ENCODE measurements at regions of chr20 and their contacts with region 1.

Region 1: DNA sequence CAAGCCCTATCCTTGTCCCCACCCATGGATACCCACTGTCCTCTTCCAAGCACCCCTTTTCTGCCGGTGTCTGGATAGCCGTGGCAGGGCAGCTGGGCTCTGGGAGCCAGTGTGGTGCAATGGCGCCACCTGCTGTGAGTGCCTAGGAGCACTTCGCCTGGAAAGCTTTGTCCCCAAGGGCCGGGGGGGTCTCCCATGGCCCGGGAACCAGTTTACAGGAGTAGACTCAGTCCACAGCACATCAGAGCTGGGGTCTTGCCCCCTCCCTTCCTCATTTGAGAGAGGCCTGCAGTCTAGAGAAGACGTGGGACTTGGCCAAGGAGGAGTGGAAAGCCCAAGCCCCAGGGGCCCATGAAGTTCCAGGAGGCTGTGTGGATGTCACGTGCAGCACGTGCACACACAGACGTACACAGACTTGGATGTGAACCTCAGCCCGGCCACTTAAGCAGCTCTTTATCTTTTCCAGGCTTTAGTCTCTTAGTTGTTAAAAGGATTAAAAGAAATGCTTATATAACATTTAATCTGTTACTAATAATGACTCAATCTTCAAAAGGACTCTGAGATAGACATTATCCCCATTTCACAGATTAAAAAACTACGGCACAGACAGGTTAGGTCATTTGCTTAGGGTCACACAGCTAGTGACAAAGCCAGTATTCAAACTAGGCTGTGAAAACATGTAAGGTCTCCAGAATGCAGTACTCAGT is 40.9 kb upstream of the CDH22 start:
- DNase-seq: peak; percentile 43 to 67
- ATAC-seq: peak; percentile 46 to 77; a peak in 4 of 6 replicates
- H3K4me3 ChIP-seq: no peak overlapping the region
- H3K27ac ChIP-seq: no peak overlapping the region
- H3K4me1 ChIP-seq: peaks cover 14% of the 10 kb centered on the region
- CTCF ChIP-seq: peak; percentile 66
- EP300 ChIP-seq: no peak
- POLR2A ChIP-seq: no peak
- RAD21 ChIP-seq: peak; percentile 74 to 80

Region 2: GRCh38 chr20:46220455-46221204 is 128.6 kb before region 1 on chr20:
- CTCF ChIA-PET with region 1: no interaction called
- POLR2A ChIA-PET with region 1: no interaction called
- DNase-seq: peak in 1 of 2 experiments; percentile 41
- ATAC-seq: peak in 1 of 2 experiments; percentile 66; a peak in 3 of 6 replicates
- H3K4me3 ChIP-seq: no peak overlapping the region
- H3K27ac ChIP-seq: no peak overlapping the region
- H3K4me1 ChIP-seq: peaks cover 8% of the 10 kb centered on the region; the same call in 2 of the 3 replicates
- CTCF ChIP-seq: no peak
- EP300 ChIP-seq: no peak
- POLR2A ChIP-seq: no peak
- RAD21 ChIP-seq: no peak

Region 3: DNA sequence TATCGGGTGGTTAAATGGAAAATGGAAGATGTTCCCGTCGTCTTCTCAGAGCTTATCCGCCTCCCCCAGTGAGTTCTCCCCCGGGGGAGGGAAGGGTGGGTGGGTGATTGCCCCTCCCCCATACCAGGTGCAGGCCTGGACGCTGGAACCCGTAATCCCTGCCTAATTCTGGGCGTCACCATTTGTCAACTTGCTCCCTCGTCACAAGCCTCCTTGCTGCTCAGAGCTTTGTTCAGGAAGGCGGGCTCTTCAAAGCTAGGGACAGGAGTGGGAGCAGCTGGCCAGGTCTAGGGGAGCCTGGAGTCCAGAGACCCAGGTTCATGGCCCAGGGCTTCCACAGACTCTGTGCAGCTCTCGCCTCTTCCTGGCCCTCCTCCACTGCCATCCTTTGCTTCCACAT is 66.5 kb before region 1 on chr20:
- CTCF ChIA-PET with region 1: no interaction called
- POLR2A ChIA-PET with region 1: no interaction called
- DNase-seq: no peak
- ATAC-seq: no peak
- H3K4me3 ChIP-seq: no peak overlapping the region
- H3K27ac ChIP-seq: peak overlapping the region in 1 of 2 experiments; percentile 19; a peak in 1 of 6 replicates
- H3K4me1 ChIP-seq: peaks cover 13% of the 10 kb centered on the region
- CTCF ChIP-seq: no peak
- EP300 ChIP-seq: no peak
- POLR2A ChIP-seq: no peak
- RAD21 ChIP-seq: no peak

Region 4: DNA sequence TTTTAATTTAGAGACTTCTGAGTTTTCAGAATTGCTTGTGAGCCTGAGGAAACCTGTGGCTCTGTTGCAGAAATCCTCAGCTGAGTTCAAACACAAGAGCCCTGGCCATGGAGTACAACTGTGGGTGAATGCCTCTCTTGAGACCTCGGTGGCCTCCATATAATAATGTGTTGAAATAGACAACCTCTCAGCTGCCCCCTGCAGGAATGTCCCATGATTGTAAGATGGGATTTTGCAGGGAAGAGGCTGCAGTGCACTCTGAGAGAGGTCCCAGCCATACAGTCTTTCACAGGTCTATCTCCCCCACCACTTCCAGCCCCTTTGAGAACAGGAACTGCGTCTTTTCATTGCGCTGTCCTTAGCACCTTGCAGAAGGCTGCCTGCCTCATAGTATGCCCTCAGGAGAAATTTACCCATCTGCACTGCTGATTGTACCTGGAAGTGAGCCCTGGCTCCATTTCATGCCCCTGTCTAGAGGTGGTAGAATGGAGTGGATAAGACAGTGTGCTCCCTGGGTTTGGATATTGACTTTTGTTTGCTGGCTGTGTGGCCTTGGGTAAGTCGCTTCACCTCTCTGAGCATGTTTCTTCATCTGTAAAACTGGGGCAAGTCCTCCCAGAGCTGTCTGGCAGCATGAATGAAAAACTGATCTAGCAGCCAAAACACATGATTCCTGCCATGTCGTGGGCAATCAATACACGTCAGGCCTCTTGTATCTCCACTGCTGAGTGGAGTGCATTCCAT is 24.1 kb before region 1 on chr20:
- CTCF ChIA-PET with region 1: interaction called, 13 read pairs
- POLR2A ChIA-PET with region 1: no interaction called
- DNase-seq: peak; percentile 56 to 62
- ATAC-seq: peak; percentile 85 to 95
- H3K4me3 ChIP-seq: no peak overlapping the region
- H3K27ac ChIP-seq: no peak overlapping the region
- H3K4me1 ChIP-seq: no peaks in the 10 kb centered on the region
- CTCF ChIP-seq: peak; percentile 43; the same call in 2 of the 3 replicates
- EP300 ChIP-seq: no peak
- POLR2A ChIP-seq: no peak
- RAD21 ChIP-seq: peak; percentile 38 to 50; a peak in 3 of 5 replicates

Region 5: GRCh38 chr20:46330072-46330763 is 19.0 kb before region 1 on chr20:
- CTCF ChIA-PET with region 1: interaction called, 27 read pairs
- POLR2A ChIA-PET with region 1: no interaction called
- DNase-seq: no peak
- ATAC-seq: no peak
- H3K4me3 ChIP-seq: no peak overlapping the region
- H3K27ac ChIP-seq: no peak overlapping the region
- H3K4me1 ChIP-seq: no peaks in the 10 kb centered on the region
- CTCF ChIP-seq: no peak
- EP300 ChIP-seq: no peak
- POLR2A ChIP-seq: no peak
- RAD21 ChIP-seq: no peak

Region 6: GRCh38 chr20:46363800-46364634 is 14.8 kb after region 1 on chr20:
- CTCF ChIA-PET with region 1: interaction called, 25 read pairs
- POLR2A ChIA-PET with region 1: interaction called, 13 read pairs
- DNase-seq: peak; percentile 86 to 88
- ATAC-seq: peak; percentile 96 to 97
- H3K4me3 ChIP-seq: peak overlapping the region; percentile 99
- H3K27ac ChIP-seq: peak overlapping the region; percentile 99
- H3K4me1 ChIP-seq: peaks cover 14% of the 10 kb centered on the region; the same call in 2 of the 3 replicates
- CTCF ChIP-seq: no peak
- EP300 ChIP-seq: no peak
- POLR2A ChIP-seq: peak; percentile 70
- RAD21 ChIP-seq: no peak

Region 7: GRCh38 chr20:46423342-46423741 is 74.2 kb after region 1 on chr20:
- CTCF ChIA-PET with region 1: no interaction called
- POLR2A ChIA-PET with region 1: no interaction called
- DNase-seq: no peak
- ATAC-seq: peak in 1 of 2 experiments; percentile 24; a peak in 2 of 6 replicates
- H3K4me3 ChIP-seq: no peak overlapping the region
- H3K27ac ChIP-seq: no peak overlapping the region
- H3K4me1 ChIP-seq: no peaks in the 10 kb centered on the region
- CTCF ChIP-seq: no peak
- EP300 ChIP-seq: no peak
- POLR2A ChIP-seq: no peak
- RAD21 ChIP-seq: no peak

Region 8: GRCh38 chr20:46520976-46521579 is 171.9 kb after region 1 on chr20:
- CTCF ChIA-PET with region 1: no interaction called
- POLR2A ChIA-PET with region 1: no interaction called
- DNase-seq: peak; percentile 33 to 67
- ATAC-seq: peak; percentile 71 to 81
- H3K4me3 ChIP-seq: no peak overlapping the region
- H3K27ac ChIP-seq: no peak overlapping the region
- H3K4me1 ChIP-seq: no peaks in the 10 kb centered on the region
- CTCF ChIP-seq: peak; percentile 52
- EP300 ChIP-seq: no peak
- POLR2A ChIP-seq: no peak
- RAD21 ChIP-seq: peak; percentile 68 to 78

Measured in A549 (cell line).